ENCODE measurements at regions of chr9 and their contacts with region 1.

Region 1: GRCh38 chr9:9002826-9003583 is 1203.4 kb upstream of the DMAC1 start:
- DNase-seq: peak in 4 of 10 donors; percentile 10 to 64 (median 32)

Region 2: DNA sequence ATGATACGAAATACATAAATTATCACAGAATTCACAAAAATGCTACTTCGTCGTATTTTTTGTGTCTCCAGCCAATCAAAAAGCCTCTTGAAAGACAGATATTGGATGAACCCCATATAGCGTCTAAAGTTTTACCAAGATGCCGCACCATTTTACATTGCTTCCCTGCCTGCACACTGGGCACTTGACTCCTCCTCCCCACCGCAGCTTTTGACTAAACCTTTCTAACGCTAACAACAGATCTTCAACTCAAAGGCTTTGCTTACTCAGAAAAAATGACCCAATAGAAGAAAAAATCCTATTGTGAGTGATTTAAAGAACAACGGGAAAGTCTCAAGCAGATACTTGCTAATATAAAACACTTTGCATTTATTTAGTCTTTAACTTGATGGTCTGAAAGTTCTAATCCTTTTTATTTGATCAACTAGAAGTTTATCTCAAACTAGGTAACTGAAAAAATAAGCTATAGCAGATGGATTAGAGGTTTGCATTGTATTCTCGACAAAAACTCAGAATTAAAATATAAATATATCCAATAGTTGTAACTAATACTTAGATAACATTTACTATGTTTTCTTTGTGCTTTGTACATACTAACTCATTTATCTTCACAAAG is 594.3 kb before region 1 on chr9:
- intact Hi-C with region 1: loop called (anchors 2 kb)
- DNase-seq: no peak

Measured in posterior cingulate gyrus (tissue), 11 donors.